ENCODE measurements at regions of chr1 and their contacts with region 1.

Region 1: DNA sequence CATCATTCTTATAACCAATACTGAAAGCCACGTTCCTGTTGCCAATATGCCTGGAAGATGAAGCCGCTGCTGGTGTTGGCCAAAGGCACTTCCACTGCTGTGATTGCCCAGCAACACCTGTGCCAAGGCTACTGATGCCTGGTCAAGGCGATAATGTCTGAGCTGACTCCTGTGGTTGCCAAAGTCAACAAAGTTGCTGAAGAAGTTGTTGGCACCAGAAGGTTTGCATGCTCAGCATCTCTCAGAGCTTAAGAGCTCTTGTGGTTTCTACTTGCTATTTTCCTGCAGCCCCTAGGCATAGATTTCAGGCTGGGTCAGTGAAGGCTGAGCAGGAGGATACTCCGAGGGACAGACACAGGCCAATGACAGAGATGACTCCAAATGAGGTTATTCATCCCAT is 63.4 kb upstream of the RAB3GAP2 start:
- DNase-seq: no peak
- H3K4me3 ChIP-seq: no peak overlapping the region
- H3K27ac ChIP-seq: 0 out of 2 replicates have a peak overlapping the region, but pooled peaks have one; percentile 8
- H3K4me1 ChIP-seq: peaks cover 2 to 20% (median 12%) of the 10 kb centered on the region in 4 experiments; a peak in 6 of 7 replicates
- H3K27me3 ChIP-seq: no peaks in the 10 kb centered on the region
- CTCF ChIP-seq: no peak
- EP300 ChIP-seq: no peak
- POLR2A ChIP-seq: no peak
- RAD21 ChIP-seq: no peak

Region 2: GRCh38 chr1:220271706-220272046 is 64.0 kb before region 1 on chr1:
- CTCF ChIA-PET with region 1: no interaction called
- POLR2A ChIA-PET with region 1: no interaction called
- DNase-seq: no peak
- H3K4me3 ChIP-seq: peak overlapping the region; percentile 77 to 95 (median 88)
- H3K27ac ChIP-seq: peak overlapping the region; percentile 96
- H3K4me1 ChIP-seq: peaks cover 2 to 13% (median 6%) of the 10 kb centered on the region in 4 experiments; a peak in 6 of 7 replicates
- H3K27me3 ChIP-seq: no peaks in the 10 kb centered on the region
- CTCF ChIP-seq: no peak
- EP300 ChIP-seq: no peak
- POLR2A ChIP-seq: no peak
- RAD21 ChIP-seq: no peak

Region 3: DNA sequence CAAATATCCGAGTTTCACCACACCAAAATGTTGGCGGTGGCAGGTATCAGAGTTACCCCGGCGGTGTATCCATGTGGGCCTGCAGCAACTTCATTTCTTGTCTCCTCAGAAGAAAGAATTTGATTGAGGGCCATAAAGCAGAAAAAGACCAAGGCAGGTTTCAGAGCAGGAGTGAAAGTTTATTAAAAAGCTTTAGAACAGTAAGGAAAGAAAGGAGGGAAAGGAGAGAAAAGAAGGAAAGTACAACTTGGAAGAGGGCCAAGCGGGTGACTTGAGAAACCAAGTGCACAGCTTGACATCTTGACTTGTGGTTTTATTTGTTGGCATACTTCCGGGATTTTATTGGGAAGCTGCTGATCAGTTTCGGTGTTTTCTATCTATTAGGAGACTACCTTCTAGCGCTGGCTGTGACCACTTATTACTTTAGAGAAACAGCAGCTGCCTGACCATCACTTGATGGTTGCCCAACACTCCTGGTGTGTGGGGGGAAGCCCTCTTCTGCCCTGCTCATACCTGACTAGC is 12.0 kb after region 1 on chr1:
- CTCF ChIA-PET with region 1: interaction called, 12 read pairs
- POLR2A ChIA-PET with region 1: interaction called, 3 read pairs
- DNase-seq: no peak
- H3K4me3 ChIP-seq: no peak overlapping the region
- H3K27ac ChIP-seq: no peak overlapping the region
- H3K4me1 ChIP-seq: no peaks in the 10 kb centered on the region; a peak in 1 of 7 replicates
- H3K27me3 ChIP-seq: no peaks in the 10 kb centered on the region; a peak in 3 of 7 replicates
- CTCF ChIP-seq: no peak
- EP300 ChIP-seq: no peak
- POLR2A ChIP-seq: no peak
- RAD21 ChIP-seq: no peak

Region 4: DNA sequence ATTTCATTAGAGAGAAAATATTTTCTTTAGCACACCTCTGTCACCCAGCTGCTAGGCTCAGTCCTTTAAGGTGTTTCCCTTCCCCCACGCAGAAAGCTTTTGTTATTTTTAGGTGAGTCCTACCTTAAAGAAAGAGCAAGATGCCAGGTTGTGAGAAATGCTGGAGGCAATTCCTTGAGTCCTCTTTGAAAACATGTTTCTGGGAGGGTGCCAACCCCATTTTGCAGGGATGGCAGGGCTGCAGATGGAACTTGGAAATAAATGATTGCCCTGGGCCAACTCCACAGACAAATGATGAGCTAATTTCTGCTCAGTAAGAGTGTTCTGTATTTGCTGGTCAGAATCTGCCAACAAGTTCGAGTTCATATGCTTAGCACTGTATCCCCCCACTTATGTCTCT is 55.8 kb after region 1 on chr1:
- CTCF ChIA-PET with region 1: no interaction called
- POLR2A ChIA-PET with region 1: no interaction called
- DNase-seq: no peak
- H3K4me3 ChIP-seq: no peak overlapping the region
- H3K27ac ChIP-seq: no peak overlapping the region
- H3K4me1 ChIP-seq: peaks cover 0 to 3% (median 0%) of the 10 kb centered on the region in 4 experiments; a peak in 2 of 7 replicates
- H3K27me3 ChIP-seq: peaks cover 0 to 1% (median 0%) of the 10 kb centered on the region in 4 experiments; a peak in 1 of 7 replicates
- CTCF ChIP-seq: no peak
- EP300 ChIP-seq: no peak
- POLR2A ChIP-seq: no peak
- RAD21 ChIP-seq: no peak